B cell (primary cell): ENCODE measurements at regions of chr5 and their contacts with region 1.

Region 1: DNA sequence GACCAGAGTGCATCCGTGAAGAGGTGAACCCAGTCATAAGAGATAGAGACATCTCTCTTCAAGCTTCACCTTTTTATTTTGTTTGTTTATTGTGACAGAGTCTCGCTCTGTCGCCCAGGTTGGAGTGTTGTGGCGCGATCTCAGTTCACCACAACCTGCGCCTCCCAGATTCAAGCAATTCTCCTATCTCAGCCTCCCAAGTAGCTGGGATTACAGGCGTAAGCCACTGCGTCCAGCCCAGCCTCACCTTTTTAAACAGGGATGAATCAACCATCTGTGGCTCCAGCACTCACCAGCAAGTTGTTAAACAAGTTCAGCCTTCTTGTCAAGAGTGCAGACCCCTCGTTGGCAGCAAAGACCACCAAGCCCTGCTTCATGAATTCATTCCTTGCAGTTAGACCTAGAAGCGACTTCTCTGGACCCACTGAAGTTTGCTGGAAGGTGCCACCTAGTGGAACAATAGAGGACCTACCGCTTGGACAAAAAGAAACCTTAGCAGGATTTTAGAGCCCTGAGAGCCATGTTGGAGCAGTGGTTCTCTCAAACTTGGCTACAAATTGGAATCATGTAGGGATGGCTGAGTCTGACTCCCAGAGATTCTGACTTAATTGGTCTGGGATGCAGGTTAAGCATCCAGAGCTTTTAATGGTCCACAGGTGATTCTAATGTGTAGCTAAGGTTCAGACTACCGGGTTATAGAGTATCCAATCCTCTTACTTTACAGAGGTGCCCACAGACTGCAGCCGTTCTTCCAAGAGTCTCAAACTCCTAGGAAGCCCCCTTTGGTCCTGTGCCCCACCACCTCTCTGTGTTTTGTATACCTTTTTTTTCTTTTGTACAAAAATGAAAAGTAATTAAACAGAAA is 10.5 kb upstream of the GALNT10 start:
- DNase-seq: peak; percentile 64
- ATAC-seq: peak; percentile 84
- H3K4me3 ChIP-seq: no peak overlapping the region
- H3K4me3 Mint-ChIP-seq: no peak overlapping the region
- H3K27ac ChIP-seq: no peak overlapping the region
- H3K27ac Mint-ChIP-seq: no peak overlapping the region
- H3K4me1 ChIP-seq: peaks cover 0 to 7% of the 10 kb centered on the region in 2 donors
- H3K4me1 Mint-ChIP-seq: peaks cover 18% of the 10 kb centered on the region
- H3K27me3 ChIP-seq: no peaks in the 10 kb centered on the region
- H3K27me3 Mint-ChIP-seq: peaks cover 14% of the 10 kb centered on the region
- CTCF ChIP-seq: peak; percentile 92

Region 2: GRCh38 chr5:153584126-153584959 is 595.7 kb before region 1 on chr5:
- CTCF ChIA-PET with region 1: no interaction called
- POLR2A ChIA-PET with region 1: no interaction called
- intact Hi-C with region 1: no loop called
- DNase-seq: no peak
- ATAC-seq: no peak
- H3K4me3 ChIP-seq: no peak overlapping the region
- H3K4me3 Mint-ChIP-seq: no peak overlapping the region
- H3K27ac ChIP-seq: no peak overlapping the region
- H3K27ac Mint-ChIP-seq: no peak overlapping the region
- H3K4me1 ChIP-seq: no peaks in the 10 kb centered on the region
- H3K4me1 Mint-ChIP-seq: no peaks in the 10 kb centered on the region
- H3K27me3 ChIP-seq: no peaks in the 10 kb centered on the region
- H3K27me3 Mint-ChIP-seq: no peaks in the 10 kb centered on the region
- CTCF ChIP-seq: no peak

Region 3: DNA sequence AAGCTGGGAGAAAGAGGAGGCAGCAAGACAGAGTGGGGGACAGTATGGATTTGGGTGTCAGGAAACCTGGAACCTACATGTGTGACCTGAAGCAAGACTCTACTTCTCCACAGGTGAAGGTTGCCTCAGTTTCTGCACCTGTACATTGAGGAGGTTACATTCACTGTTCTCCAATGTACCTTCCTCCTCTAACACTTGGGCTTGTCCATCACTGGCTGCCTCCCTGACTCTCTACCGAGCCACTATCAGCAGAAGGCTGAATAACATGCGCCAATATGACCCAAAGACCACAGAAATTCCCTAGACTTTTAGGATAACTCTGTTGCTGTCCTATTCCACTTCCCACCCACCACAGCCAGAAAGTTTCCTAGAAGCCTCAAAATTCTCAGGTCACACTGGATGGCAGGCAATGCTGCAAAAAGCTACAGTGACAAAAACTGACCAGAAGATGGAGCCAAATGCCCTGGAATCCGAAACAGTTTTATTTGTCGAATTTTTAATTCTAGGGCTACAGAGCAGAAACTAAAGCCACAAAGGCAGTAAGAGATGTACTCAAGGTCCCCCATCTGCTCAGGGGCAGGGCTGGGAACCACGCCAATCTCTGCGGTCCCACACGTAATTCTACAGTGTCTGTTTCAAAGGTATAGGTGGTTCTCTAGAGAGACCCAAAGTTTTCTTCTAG is 205.8 kb before region 1 on chr5:
- CTCF ChIA-PET with region 1: interaction called, 16 read pairs
- POLR2A ChIA-PET with region 1: no interaction called
- intact Hi-C with region 1: no loop called
- DNase-seq: peak; percentile 49
- ATAC-seq: no peak
- H3K4me3 ChIP-seq: no peak overlapping the region
- H3K4me3 Mint-ChIP-seq: no peak overlapping the region
- H3K27ac ChIP-seq: no peak overlapping the region
- H3K27ac Mint-ChIP-seq: no peak overlapping the region
- H3K4me1 ChIP-seq: peaks cover 0 to 3% of the 10 kb centered on the region in 2 donors
- H3K4me1 Mint-ChIP-seq: no peaks in the 10 kb centered on the region
- H3K27me3 ChIP-seq: peaks cover 0 to 8% (median 3%) of the 10 kb centered on the region in 4 experiments
- H3K27me3 Mint-ChIP-seq: peaks cover 32% of the 10 kb centered on the region
- CTCF ChIP-seq: peak; percentile 80